WTC11 (cell line): ENCODE measurements at regions of chr17 and their contacts with region 1.

Region 1: GRCh38 chr17:42819944-42820535 is 4.0 kb downstream of the BECN1 start:
- DNase-seq: peak; percentile 84
- ATAC-seq: peak; percentile 39
- H3K4me3 Mint-ChIP-seq: no peak overlapping the region
- H3K27ac Mint-ChIP-seq: peak overlapping the region; percentile 71
- H3K4me1 Mint-ChIP-seq: peaks cover 7% of the 10 kb centered on the region
- H3K27me3 Mint-ChIP-seq: no peaks in the 10 kb centered on the region
- CTCF ChIP-seq: peak; percentile 72

Region 2: GRCh38 chr17:42779936-42780850 is 39.8 kb before region 1 on chr17 and contains the start of gene WNK4:
- CTCF ChIA-PET with region 1: interaction called, 10 read pairs
- POLR2A ChIA-PET with region 1: interaction called, 7 read pairs
- DNase-seq: peak; percentile 66
- ATAC-seq: peak; percentile 71
- H3K4me3 Mint-ChIP-seq: peak within 1 kb of the TSS; percentile 70
- H3K27ac Mint-ChIP-seq: peak within 1 kb of the TSS; percentile 54
- H3K4me1 Mint-ChIP-seq: peaks cover 20% of the 10 kb centered on the region
- H3K27me3 Mint-ChIP-seq: peaks cover 41% of the 10 kb centered on the region
- CTCF ChIP-seq: no peak
- total RNA-seq, gene WNK4: 1.4 to 1.7 TPM (median 1.5 TPM) in 3 replicates

Region 3: DNA sequence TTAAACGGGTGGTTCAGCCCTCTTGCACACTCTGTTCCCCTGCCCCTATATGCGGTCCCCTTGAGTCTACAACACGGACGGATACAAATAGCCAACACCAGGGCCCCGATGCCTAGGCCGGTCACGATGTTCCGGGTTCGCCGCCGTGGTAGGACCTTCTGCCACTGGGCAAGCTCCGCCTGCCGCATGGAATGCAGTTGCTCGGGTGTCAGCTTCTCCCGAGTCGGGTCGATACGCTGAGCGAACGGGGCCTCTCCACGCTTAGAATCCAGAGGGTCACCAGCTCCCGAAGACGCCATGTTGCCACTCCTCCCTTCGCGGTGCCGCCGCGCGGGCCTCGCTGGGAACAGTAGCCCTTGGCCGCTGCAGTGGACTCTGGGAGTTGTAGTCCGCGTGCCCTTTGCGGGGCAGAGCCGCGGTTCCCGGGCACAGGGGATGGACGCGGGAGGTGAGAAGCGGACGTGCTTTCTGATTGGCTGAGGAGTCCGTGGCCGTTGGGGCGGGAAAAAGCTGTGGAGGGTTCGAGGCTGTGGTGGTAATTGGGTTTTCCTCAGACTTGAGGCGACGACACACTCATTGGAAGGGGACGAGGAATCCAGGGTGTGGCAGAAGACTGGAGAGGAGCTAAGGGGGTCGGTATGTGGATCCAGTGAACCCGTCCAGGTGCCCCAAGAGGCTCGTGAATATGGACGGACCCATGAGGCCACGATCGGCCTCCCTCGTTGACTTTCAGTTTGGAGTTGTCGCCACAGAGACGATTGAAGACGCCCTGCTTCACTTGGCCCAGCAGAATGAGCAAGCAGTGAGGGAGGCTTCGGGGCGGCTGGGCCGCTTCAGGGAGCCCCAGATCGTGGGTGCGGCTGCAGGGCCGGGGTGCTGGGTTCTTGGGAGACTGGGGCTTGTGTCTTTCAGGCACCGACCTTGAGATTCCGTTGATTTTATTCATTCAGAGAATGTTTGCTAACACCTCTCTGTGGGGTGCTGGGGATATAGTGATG is 21.4 kb before region 1 on chr17 and contains the starts of genes CNTD1 and COA3:
- CTCF ChIA-PET with region 1: interaction called, 19 read pairs
- POLR2A ChIA-PET with region 1: no interaction called
- DNase-seq: peak; percentile 92
- ATAC-seq: peak; percentile 99
- H3K4me3 Mint-ChIP-seq: peak within 1 kb of the TSS; percentile 94
- H3K27ac Mint-ChIP-seq: no peak within 1 kb of the TSS; the same call in 1 of the 2 replicates
- H3K4me1 Mint-ChIP-seq: peaks cover 6% of the 10 kb centered on the region; the same call in 1 of the 2 replicates
- H3K27me3 Mint-ChIP-seq: peaks cover 29% of the 10 kb centered on the region
- CTCF ChIP-seq: no peak
- total RNA-seq, gene CNTD1: not detected in 3 replicates
- total RNA-seq, gene COA3: 54.2 to 65.2 TPM (median 60.9 TPM) in 3 replicates

Region 4: DNA sequence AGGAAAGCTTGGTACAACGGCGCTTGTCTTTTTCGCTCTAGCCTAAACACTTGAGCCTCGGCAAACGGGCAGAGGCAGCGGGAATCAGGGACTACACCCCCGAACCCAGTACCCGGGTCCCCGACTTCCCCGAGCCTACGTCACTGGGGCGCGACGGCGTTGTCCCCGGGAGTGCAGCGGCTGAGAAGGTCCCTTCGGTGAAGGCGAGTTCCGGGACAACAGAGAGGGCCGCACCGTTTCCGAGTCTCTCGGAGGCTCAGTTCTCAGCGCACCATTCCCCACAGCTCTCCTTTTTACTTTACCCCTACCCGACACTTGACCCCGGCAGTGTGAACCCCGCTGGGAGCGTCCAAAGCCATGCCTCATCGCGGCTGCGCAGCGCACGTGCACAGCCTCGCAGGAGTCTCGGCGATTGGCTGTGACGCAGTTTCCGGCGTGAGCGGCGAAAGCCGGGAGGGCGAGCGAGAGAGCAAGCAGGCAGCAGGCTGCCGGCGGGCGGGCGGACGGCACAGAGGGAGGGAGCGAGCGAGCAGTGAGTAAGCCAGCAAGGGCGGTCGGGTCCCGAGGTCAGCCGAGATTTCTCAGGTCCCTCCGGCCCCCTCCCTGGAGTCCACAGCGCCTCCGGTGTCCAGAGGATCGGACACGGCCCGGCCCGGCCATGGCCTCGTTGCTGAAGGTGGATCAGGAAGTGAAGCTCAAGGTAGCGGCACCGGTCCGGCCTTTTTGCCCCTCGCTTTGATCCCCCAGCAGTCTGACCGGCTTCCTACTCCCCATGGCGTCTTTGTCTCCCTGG is 13.1 kb after region 1 on chr17 and contains the start of gene PSME3:
- CTCF ChIA-PET with region 1: interaction called, 19 read pairs
- POLR2A ChIA-PET with region 1: no interaction called
- DNase-seq: peak; percentile 91
- ATAC-seq: peak; percentile 86
- H3K4me3 Mint-ChIP-seq: peak within 1 kb of the TSS; percentile 93
- H3K27ac Mint-ChIP-seq: peak within 1 kb of the TSS; percentile 97
- H3K4me1 Mint-ChIP-seq: peaks cover 16% of the 10 kb centered on the region
- H3K27me3 Mint-ChIP-seq: peaks cover 13% of the 10 kb centered on the region
- CTCF ChIP-seq: no peak
- total RNA-seq, gene PSME3: 141 to 192 TPM (median 159 TPM) in 3 replicates

Region 5: DNA sequence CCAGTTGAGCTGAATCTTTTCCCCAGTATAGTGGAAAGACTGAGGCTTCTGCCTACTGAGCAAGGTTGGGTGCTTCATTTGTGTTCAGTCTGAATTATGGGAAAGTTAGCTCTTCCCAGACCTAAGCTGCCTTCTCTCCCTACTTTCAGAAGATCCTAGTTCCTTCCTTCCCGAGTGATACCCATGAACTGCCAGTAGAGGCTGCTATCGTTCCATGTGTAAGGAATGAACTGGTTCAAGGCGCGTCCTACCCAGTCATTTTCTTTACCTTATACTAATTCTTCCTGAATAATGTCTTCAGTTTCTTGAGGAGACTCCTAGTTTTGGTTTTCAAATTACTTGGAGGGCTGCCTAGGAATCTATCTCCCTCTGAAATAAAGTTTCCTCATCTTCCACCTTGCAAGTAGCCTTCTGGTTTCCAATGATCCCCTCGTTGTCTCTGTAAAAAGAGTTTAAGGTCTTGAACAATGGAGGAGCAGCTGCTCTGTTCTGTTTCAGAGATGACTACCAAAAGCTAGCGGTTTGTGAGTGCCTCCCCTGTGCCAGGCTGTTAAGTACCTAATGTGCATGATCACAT is 23.4 kb after region 1 on chr17:
- CTCF ChIA-PET with region 1: interaction called, 15 read pairs
- POLR2A ChIA-PET with region 1: no interaction called
- DNase-seq: peak; percentile 46
- ATAC-seq: peak; percentile 74
- H3K4me3 Mint-ChIP-seq: no peak overlapping the region
- H3K27ac Mint-ChIP-seq: no peak overlapping the region
- H3K4me1 Mint-ChIP-seq: no peaks in the 10 kb centered on the region
- H3K27me3 Mint-ChIP-seq: no peaks in the 10 kb centered on the region
- CTCF ChIP-seq: peak; percentile 67

Region 6: GRCh38 chr17:42928714-42929496 is 108.9 kb after region 1 on chr17:
- CTCF ChIA-PET with region 1: interaction called, 18 read pairs
- POLR2A ChIA-PET with region 1: interaction called, 4 read pairs
- DNase-seq: peak; percentile 32
- ATAC-seq: peak; percentile 97
- H3K4me3 Mint-ChIP-seq: no peak overlapping the region
- H3K27ac Mint-ChIP-seq: peak overlapping the region; percentile 72
- H3K4me1 Mint-ChIP-seq: peaks cover 14% of the 10 kb centered on the region
- H3K27me3 Mint-ChIP-seq: no peaks in the 10 kb centered on the region
- CTCF ChIP-seq: peak; percentile 45

Region 7: DNA sequence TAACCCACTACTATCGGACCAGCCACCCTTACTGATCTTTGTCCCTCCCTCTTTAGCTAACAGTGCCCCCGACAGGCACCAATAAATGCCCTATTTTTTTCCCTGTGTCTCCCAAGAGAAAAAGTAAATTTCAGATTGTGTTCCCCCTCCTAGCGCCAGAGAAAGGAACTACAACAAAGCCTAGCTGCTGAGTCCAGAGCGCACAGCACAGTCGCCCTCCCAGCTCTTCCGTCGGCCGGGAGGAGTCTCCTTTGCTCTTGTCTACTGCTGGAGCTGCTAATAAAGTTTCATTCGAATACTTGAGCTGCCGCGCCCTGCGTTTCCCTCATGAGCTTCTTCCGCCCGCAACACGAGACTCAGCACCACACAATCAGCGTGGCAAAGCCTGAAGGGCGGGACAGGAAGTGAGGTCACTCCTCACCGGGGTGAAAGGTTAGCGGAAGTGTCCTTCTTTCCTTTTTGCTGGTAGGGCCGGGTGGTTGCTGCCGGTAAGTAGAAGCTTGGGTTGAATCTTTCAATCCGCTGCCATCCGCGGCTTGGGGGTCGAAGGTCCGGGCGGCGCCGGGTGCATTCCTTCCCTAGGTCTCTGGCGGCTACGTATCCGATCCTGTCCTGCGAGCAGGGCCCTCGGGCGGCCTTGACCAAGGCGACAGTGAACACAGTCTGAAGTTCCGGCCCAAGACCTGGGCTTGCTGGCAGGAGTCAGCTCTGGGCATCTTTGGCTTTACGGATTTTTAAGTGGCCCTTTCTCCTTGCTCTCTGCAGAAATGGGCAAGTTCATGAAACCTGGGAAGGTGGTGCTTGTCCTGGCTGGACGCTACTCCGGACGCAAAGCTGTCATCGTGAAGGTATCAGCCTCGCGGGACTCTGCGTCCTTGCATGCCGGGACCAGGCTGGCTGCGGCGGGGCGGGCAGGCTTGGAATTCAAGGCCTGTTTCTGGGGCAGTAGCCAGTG is 178.2 kb after region 1 on chr17 and contains the start of gene RPL27:
- CTCF ChIA-PET with region 1: interaction called, 13 read pairs
- POLR2A ChIA-PET with region 1: interaction called, 8 read pairs
- DNase-seq: peak; percentile 96
- ATAC-seq: peak; percentile 96
- H3K4me3 Mint-ChIP-seq: peak within 1 kb of the TSS; percentile 100
- H3K27ac Mint-ChIP-seq: peak within 1 kb of the TSS; percentile 99
- H3K4me1 Mint-ChIP-seq: peaks cover 31% of the 10 kb centered on the region
- H3K27me3 Mint-ChIP-seq: no peaks in the 10 kb centered on the region; the same call in 1 of the 2 replicates
- CTCF ChIP-seq: peak; percentile 77
- total RNA-seq, gene RPL27: 1,391 to 1,553 TPM (median 1,518 TPM) in 3 replicates